ENCODE measurements at regions of chr2 and their contacts with region 1.

Region 1: GRCh38 chr2:196171248-196171871 is at the start of gene STK17B:
- DNase-seq: peak; percentile 98
- H3K4me3 Mint-ChIP-seq: peak within 1 kb of the TSS; percentile 94
- H3K27ac Mint-ChIP-seq: peak within 1 kb of the TSS; percentile 97
- H3K4me1 Mint-ChIP-seq: peaks cover 39% of the 10 kb centered on the region
- H3K27me3 Mint-ChIP-seq: no peaks in the 10 kb centered on the region
- total RNA-seq, gene STK17B: 365 to 367 TPM

Region 2: GRCh38 chr2:195961873-195962272 is 209.5 kb before region 1 on chr2:
- CTCF ChIA-PET with region 1: no interaction called
- POLR2A ChIA-PET with region 1: no interaction called
- DNase-seq: no peak
- H3K4me3 Mint-ChIP-seq: no peak overlapping the region
- H3K27ac Mint-ChIP-seq: no peak overlapping the region
- H3K4me1 Mint-ChIP-seq: no peaks in the 10 kb centered on the region
- H3K27me3 Mint-ChIP-seq: peaks cover 3% of the 10 kb centered on the region

Region 3: DNA sequence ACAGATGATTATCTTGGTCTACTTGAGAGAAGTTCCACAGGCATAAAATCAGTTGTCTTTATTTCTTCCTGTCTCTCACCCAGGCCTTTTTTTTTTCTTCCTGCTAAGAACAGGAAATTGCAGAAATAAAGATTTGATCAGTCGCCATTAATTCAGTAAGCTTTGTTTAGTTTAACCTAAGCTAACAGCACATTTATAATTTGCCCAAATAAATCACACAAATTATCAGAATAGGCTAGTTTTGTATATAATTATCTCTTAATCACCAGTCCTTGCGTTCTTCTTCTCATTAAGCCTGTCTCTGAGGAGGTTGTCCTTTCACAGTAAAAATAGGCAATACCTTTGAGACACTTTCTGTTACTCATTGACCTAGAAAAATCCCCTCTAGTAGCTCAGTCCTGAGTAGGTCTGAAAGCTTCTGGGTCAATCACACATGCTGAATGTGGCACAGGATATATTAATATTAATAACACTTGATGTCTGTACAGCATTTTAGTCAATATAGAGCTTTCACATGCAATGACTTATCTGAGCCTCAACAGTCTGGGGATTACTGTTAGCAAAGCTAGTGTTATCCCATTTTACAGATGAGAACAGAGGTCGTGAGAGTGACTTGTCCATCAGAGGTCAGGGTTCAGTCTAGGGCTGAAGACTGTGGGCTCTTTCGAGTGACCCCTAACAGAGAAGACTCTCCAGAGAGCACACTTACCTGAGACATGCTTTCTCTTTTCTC is 11.2 kb after region 1 on chr2:
- CTCF ChIA-PET with region 1: interaction called, 17 read pairs
- POLR2A ChIA-PET with region 1: interaction called, 383 read pairs
- DNase-seq: no peak
- H3K4me3 Mint-ChIP-seq: peak overlapping the region; percentile 75
- H3K27ac Mint-ChIP-seq: peak overlapping the region; percentile 98
- H3K4me1 Mint-ChIP-seq: peaks cover 83% of the 10 kb centered on the region
- H3K27me3 Mint-ChIP-seq: no peaks in the 10 kb centered on the region

Region 4: DNA sequence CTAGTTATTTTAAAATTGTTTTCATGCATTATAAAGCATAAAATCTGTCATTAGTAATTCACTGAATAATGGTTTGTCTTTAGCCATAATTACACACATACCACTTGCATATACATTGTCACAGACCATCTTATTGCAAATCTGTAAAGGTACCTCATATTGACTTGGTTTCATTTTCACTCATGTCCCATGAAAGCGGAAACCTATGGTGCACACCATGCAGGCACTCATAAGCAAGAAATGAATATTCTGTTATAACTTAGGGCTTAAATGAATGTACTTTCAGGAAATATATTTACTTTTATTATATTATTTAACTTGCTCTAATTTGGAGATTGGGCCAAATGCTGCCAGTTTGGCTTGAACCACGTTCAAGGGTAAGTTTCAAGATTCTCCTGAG is 29.2 kb after region 1 on chr2:
- CTCF ChIA-PET with region 1: interaction called, 6 read pairs
- POLR2A ChIA-PET with region 1: interaction called, 88 read pairs
- DNase-seq: peak; percentile 56
- H3K4me3 Mint-ChIP-seq: peak overlapping the region; percentile 64
- H3K27ac Mint-ChIP-seq: peak overlapping the region; percentile 89
- H3K4me1 Mint-ChIP-seq: peaks cover 56% of the 10 kb centered on the region
- H3K27me3 Mint-ChIP-seq: no peaks in the 10 kb centered on the region

Region 5: GRCh38 chr2:196239622-196240587 is 68.5 kb after region 1 on chr2:
- CTCF ChIA-PET with region 1: interaction called, 5 read pairs
- POLR2A ChIA-PET with region 1: interaction called, 188 read pairs
- DNase-seq: peak; percentile 93
- H3K4me3 Mint-ChIP-seq: peak overlapping the region; percentile 57
- H3K27ac Mint-ChIP-seq: peak overlapping the region; percentile 93
- H3K4me1 Mint-ChIP-seq: peaks cover 74% of the 10 kb centered on the region
- H3K27me3 Mint-ChIP-seq: no peaks in the 10 kb centered on the region

Region 6: GRCh38 chr2:196268538-196269338 is 97.4 kb after region 1 on chr2:
- CTCF ChIA-PET with region 1: interaction called, 4 read pairs
- POLR2A ChIA-PET with region 1: interaction called, 56 read pairs
- DNase-seq: no peak
- H3K4me3 Mint-ChIP-seq: peak overlapping the region; percentile 40
- H3K27ac Mint-ChIP-seq: peak overlapping the region; percentile 58
- H3K4me1 Mint-ChIP-seq: peaks cover 63% of the 10 kb centered on the region
- H3K27me3 Mint-ChIP-seq: no peaks in the 10 kb centered on the region